Mammary epithelial cell (primary cell): ENCODE measurements at regions of chr11 and their contacts with region 1.

Region 1: DNA sequence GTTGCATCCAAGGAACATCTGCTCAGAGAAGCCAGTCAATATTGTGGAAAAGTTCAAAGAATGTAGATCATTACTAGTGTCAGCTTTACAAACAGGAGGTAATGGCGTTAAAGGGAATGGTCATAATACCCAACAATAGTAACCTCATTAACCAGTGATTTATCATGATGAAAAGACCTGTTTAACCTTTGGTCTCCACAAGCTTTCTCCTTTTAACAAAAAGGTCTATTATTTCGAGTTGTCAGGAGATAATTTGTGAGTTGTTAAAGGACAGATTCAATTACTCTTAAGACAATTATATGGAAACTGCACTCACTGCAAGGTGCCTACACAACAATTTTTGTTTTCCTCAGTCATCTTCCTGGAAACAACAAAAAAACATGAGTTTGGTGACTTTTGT is 73.8 kb upstream of the HTATIP2 start:
- DNase-seq: no peak
- H3K4me3 ChIP-seq: no peak overlapping the region
- H3K27ac ChIP-seq: no peak overlapping the region
- H3K4me1 ChIP-seq: no peaks in the 10 kb centered on the region
- H3K27me3 ChIP-seq: peaks cover 17% of the 10 kb centered on the region
- CTCF ChIP-seq: no peak

Region 2: GRCh38 chr11:20158597-20159257 is 131.0 kb before region 1 on chr11:
- CTCF ChIA-PET with region 1: no interaction called
- dilution Hi-C with region 1: no loop called
- in situ Hi-C with region 1: no loop called
- intact Hi-C with region 1: loop called (anchors 5 kb)
- DNase-seq: peak; percentile 44
- H3K4me3 ChIP-seq: no peak overlapping the region
- H3K27ac ChIP-seq: no peak overlapping the region
- H3K4me1 ChIP-seq: peaks cover 7% of the 10 kb centered on the region
- H3K27me3 ChIP-seq: peaks cover 79% of the 10 kb centered on the region
- CTCF ChIP-seq: no peak

Region 3: GRCh38 chr11:20226933-20227332 is 62.8 kb before region 1 on chr11:
- CTCF ChIA-PET with region 1: no interaction called
- dilution Hi-C with region 1: no loop called
- in situ Hi-C with region 1: no loop called
- intact Hi-C with region 1: no loop called
- DNase-seq: no peak
- H3K4me3 ChIP-seq: no peak overlapping the region
- H3K27ac ChIP-seq: no peak overlapping the region
- H3K4me1 ChIP-seq: no peaks in the 10 kb centered on the region
- H3K27me3 ChIP-seq: no peaks in the 10 kb centered on the region
- CTCF ChIP-seq: no peak